Activated CD8-positive, alpha-beta T cell treated with anti-CD3 and anti-CD28 coated beads for 36 hours (primary cell): ENCODE measurements at regions of chr13 and their contacts with region 1.

Region 1: GRCh38 chr13:59677966-59678814 is 485.5 kb downstream of the DIAPH3 start:
- DNase-seq: peak; percentile 5
- ATAC-seq: peak; percentile 79
- H3K4me3 Mint-ChIP-seq: no peak overlapping the region
- H3K27ac Mint-ChIP-seq: no peak overlapping the region
- H3K4me1 Mint-ChIP-seq: no peaks in the 10 kb centered on the region
- H3K27me3 Mint-ChIP-seq: no peaks in the 10 kb centered on the region
- CTCF ChIP-seq: peak; percentile 64

Region 2: DNA sequence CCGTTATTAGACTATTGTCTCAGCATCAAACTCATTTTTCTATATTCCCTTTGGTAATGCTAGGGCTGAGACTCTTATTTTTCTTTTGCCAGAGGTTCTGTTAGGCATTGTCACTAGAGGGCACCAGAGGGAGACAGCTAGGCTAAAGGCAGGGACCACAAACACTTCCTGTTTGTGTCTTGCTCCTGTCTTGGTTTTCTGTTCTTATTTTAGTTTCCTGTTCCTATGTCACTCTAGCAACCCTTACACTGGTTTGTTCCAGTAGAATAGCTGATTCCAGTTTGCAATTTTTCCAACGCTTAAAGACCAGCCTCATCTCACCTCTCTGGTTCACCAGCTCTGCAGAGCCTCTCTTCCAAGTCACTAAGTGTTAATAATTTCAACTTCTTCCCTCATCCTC is 286.5 kb before region 1 on chr13:
- CTCF ChIA-PET with region 1: interaction called, 22 read pairs
- POLR2A ChIA-PET with region 1: no interaction called
- intact Hi-C with region 1: loop called (anchors 2 kb)
- DNase-seq: peak; percentile 68
- ATAC-seq: peak; percentile 96
- H3K4me3 Mint-ChIP-seq: no peak overlapping the region
- H3K27ac Mint-ChIP-seq: no peak overlapping the region
- H3K4me1 Mint-ChIP-seq: no peaks in the 10 kb centered on the region
- H3K27me3 Mint-ChIP-seq: peaks cover 2% of the 10 kb centered on the region
- CTCF ChIP-seq: peak; percentile 75

Region 3: GRCh38 chr13:60335531-60335930 is 657.3 kb after region 1 on chr13:
- CTCF ChIA-PET with region 1: interaction called, 3 read pairs
- POLR2A ChIA-PET with region 1: no interaction called
- intact Hi-C with region 1: loop called (anchors 5 kb)
- DNase-seq: no peak
- ATAC-seq: no peak
- H3K4me3 Mint-ChIP-seq: no peak overlapping the region
- H3K27ac Mint-ChIP-seq: no peak overlapping the region
- H3K4me1 Mint-ChIP-seq: no peaks in the 10 kb centered on the region
- H3K27me3 Mint-ChIP-seq: peaks cover 2% of the 10 kb centered on the region
- CTCF ChIP-seq: peak; percentile 68